ENCODE measurements at regions of chr7 and their contacts with region 1.

Region 1: GRCh38 chr7:99918959-99919813 is at the start of gene TRIM4:
- DNase-seq: peak; percentile 96
- ATAC-seq: peak; percentile 99
- H3K4me3 Mint-ChIP-seq: peak within 1 kb of the TSS; percentile 92
- H3K27ac Mint-ChIP-seq: peak within 1 kb of the TSS; percentile 95
- H3K4me1 Mint-ChIP-seq: peaks cover 33% of the 10 kb centered on the region
- H3K27me3 Mint-ChIP-seq: no peaks in the 10 kb centered on the region
- total RNA-seq, gene TRIM4: 23.9 to 25.7 TPM

Region 2: GRCh38 chr7:99525713-99526440 is 393.3 kb before region 1 on chr7:
- CTCF ChIA-PET with region 1: interaction called, 4 read pairs
- POLR2A ChIA-PET with region 1: interaction called, 10 read pairs
- intact Hi-C with region 1: no loop called
- DNase-seq: peak; percentile 59
- ATAC-seq: peak; percentile 64
- H3K4me3 Mint-ChIP-seq: no peak overlapping the region
- H3K27ac Mint-ChIP-seq: no peak overlapping the region
- H3K4me1 Mint-ChIP-seq: no peaks in the 10 kb centered on the region
- H3K27me3 Mint-ChIP-seq: no peaks in the 10 kb centered on the region

Region 3: DNA sequence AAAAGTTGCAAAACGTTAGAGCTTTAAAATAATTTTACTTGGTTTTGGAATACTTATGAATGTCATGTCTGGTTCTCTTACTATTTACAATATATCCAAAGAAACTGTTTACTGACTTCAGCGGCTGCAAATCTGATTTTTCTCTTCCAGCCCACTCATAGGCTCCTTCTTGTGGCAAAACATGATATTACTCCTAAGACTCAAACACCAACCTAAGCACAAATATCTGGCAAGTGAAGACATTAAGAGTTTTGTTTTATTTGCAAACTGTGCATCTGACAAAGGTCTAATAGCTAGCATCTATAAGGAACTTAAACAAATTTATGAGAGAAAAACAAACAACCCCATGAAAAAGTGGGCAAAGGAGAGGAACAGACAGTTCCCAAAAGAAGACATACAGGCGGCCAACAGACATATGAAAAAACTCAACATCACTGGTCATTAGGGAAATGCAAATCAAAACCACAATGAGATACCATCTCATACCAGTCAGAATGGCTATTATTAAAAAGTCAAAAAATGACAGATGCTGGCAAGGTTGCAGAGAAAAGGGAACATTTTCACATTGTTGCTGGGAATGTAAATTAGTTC is 30.5 kb after region 1 on chr7:
- CTCF ChIA-PET with region 1: interaction called, 44 read pairs
- POLR2A ChIA-PET with region 1: no interaction called
- intact Hi-C with region 1: no loop called
- DNase-seq: no peak
- ATAC-seq: no peak
- H3K4me3 Mint-ChIP-seq: no peak overlapping the region
- H3K27ac Mint-ChIP-seq: no peak overlapping the region
- H3K4me1 Mint-ChIP-seq: peaks cover 9% of the 10 kb centered on the region
- H3K27me3 Mint-ChIP-seq: peaks cover 6% of the 10 kb centered on the region

Region 4: DNA sequence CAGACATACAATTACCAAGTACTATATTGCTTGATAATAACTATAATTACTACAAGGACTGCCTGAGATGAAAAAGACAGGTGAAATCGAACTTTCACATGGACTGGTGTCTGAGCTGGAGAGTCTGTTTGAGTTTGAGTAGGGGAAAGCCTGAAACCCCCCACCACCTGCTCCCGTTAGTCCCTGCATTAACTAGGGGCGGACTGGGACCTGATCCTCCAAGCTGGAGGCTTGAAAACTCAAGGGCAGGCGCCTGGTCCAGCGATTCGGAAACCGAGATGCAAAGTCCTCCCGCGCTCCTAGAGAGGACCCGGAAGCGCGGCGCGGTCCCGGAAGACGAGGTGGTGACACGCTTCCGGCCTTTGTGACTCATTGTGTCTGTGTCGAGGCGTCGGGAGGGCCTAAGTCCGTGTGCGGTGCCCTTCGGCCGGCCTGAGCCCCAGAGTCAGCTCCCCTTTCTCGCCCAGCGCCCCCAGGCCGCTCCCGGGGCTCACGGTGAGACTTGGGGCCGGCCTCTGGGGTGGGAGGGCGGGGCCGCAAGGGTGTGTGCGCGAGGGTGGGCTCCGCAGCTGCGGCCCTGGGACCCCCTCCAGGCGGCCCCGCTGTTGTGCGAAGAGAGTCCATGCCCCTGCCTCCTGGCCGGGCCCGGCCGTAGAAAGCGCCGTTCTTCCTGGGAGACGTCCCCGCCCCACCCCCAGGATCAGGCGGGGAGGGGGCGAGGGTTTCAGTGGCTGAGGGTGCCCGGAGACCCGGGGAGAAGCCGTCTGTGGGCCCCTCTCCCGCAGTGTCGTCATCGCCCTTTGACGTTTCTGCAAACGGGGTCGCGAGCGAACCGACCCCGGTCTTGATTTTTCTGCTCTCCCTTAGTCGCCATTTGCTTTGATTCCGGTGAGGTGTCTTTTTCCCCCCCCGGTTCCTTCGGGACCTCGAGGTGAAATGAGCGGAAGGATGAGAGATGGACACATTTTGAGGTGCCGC is 96.3 kb after region 1 on chr7 and contains the start of gene ZKSCAN1:
- CTCF ChIA-PET with region 1: interaction called, 14 read pairs
- POLR2A ChIA-PET with region 1: no interaction called
- intact Hi-C with region 1: loop called in 1 of 2 experiments (anchors 1 kb)
- DNase-seq: peak; percentile 92
- ATAC-seq: peak; percentile 87
- H3K4me3 Mint-ChIP-seq: peak within 1 kb of the TSS; percentile 94
- H3K27ac Mint-ChIP-seq: peak within 1 kb of the TSS; percentile 96
- H3K4me1 Mint-ChIP-seq: peaks cover 53% of the 10 kb centered on the region
- H3K27me3 Mint-ChIP-seq: no peaks in the 10 kb centered on the region
- total RNA-seq, gene ZKSCAN1: 45.2 to 62.9 TPM

Region 5: GRCh38 chr7:100119062-100119700 is 200.0 kb after region 1 on chr7 and contains the starts of genes CNPY4 and TAF6:
- CTCF ChIA-PET with region 1: no interaction called
- POLR2A ChIA-PET with region 1: no interaction called
- intact Hi-C with region 1: loop called in 1 of 2 experiments (anchors 1 kb)
- DNase-seq: peak; percentile 97
- ATAC-seq: peak; percentile 68
- H3K4me3 Mint-ChIP-seq: peak within 1 kb of the TSS; percentile 86
- H3K27ac Mint-ChIP-seq: peak within 1 kb of the TSS; percentile 94
- H3K4me1 Mint-ChIP-seq: peaks cover 19% of the 10 kb centered on the region
- H3K27me3 Mint-ChIP-seq: no peaks in the 10 kb centered on the region
- total RNA-seq, gene CNPY4: 11.0 to 14.0 TPM
- total RNA-seq, gene TAF6: 54.3 to 59.5 TPM

Measured in activated CD4-positive, alpha-beta T cell treated with anti-CD3 and anti-CD28 coated beads for 36 hours (primary cell).